ENCODE measurements at regions of chr14 and their contacts with region 1.

Region 1: GRCh38 chr14:69715725-69716477 is 51.0 kb upstream of the SRSF5 start:
- DNase-seq: peak; percentile 85
- H3K4me3 ChIP-seq: peak overlapping the region in 1 of 3 experiments; percentile 4
- H3K27ac ChIP-seq: peak overlapping the region; percentile 73
- H3K4me1 ChIP-seq: peaks cover 46% of the 10 kb centered on the region
- H3K27me3 ChIP-seq: no peaks in the 10 kb centered on the region
- CTCF ChIP-seq: no peak
- POLR2A ChIP-seq: no peak

Region 2: DNA sequence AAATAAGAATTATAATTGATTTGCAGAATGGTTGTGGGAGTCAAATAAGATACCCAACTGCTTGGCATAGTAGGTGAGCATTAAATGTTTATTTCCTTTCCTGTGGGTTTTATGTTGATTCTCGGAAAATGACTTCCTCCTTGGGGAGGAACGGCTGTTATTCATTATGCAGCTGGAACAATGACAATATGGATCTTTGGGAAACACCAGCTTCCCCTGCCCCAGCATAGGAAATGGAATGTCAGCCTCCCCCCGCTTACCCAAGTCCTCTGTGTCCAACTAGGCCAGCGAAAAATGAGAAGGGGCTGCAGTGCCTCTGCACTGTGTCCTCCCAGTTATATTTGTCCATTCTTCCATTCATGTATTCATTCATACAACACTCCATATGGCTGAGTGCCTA is 129.5 kb before region 1 on chr14:
- CTCF ChIA-PET with region 1: interaction called, 22 read pairs
- POLR2A ChIA-PET with region 1: no interaction called
- dilution Hi-C with region 1: no loop called
- intact Hi-C with region 1: no loop called
- DNase-seq: peak; percentile 90
- H3K4me3 ChIP-seq: no peak overlapping the region
- H3K27ac ChIP-seq: no peak overlapping the region
- H3K4me1 ChIP-seq: peaks cover 20% of the 10 kb centered on the region
- H3K27me3 ChIP-seq: no peaks in the 10 kb centered on the region
- CTCF ChIP-seq: no peak
- POLR2A ChIP-seq: no peak

Region 3: GRCh38 chr14:69625299-69626131 is 90.4 kb before region 1 on chr14:
- CTCF ChIA-PET with region 1: no interaction called
- POLR2A ChIA-PET with region 1: no interaction called
- dilution Hi-C with region 1: no loop called
- intact Hi-C with region 1: loop called (anchors 1 kb)
- DNase-seq: peak; percentile 78
- H3K4me3 ChIP-seq: no peak overlapping the region
- H3K27ac ChIP-seq: peak overlapping the region; percentile 54
- H3K4me1 ChIP-seq: peaks cover 18% of the 10 kb centered on the region
- H3K27me3 ChIP-seq: no peaks in the 10 kb centered on the region
- CTCF ChIP-seq: no peak
- POLR2A ChIP-seq: peak; percentile 44

Region 4: GRCh38 chr14:69667938-69668335 is 48.0 kb before region 1 on chr14:
- CTCF ChIA-PET with region 1: no interaction called
- POLR2A ChIA-PET with region 1: no interaction called
- dilution Hi-C with region 1: no loop called
- intact Hi-C with region 1: loop called (anchors 2 kb)
- DNase-seq: no peak
- H3K4me3 ChIP-seq: no peak overlapping the region
- H3K27ac ChIP-seq: no peak overlapping the region
- H3K4me1 ChIP-seq: peaks cover 9% of the 10 kb centered on the region
- H3K27me3 ChIP-seq: no peaks in the 10 kb centered on the region
- CTCF ChIP-seq: no peak
- POLR2A ChIP-seq: no peak

Region 5: GRCh38 chr14:69766984-69767368 is 51.1 kb after region 1 on chr14 and contains the start of gene SRSF5:
- CTCF ChIA-PET with region 1: no interaction called
- POLR2A ChIA-PET with region 1: no interaction called
- dilution Hi-C with region 1: no loop called
- intact Hi-C with region 1: loop called (anchors 1 kb)
- DNase-seq: peak; percentile 97
- H3K4me3 ChIP-seq: peak within 1 kb of the TSS; percentile 24 to 98 (median 76)
- H3K27ac ChIP-seq: peak within 1 kb of the TSS; percentile 88
- H3K4me1 ChIP-seq: peaks cover 27% of the 10 kb centered on the region
- H3K27me3 ChIP-seq: no peaks in the 10 kb centered on the region
- CTCF ChIP-seq: no peak
- POLR2A ChIP-seq: peak; percentile 99
- total RNA-seq, gene SRSF5: 253 and 276 TPM in 2 replicates

Measured in endothelial cell of umbilical vein (primary cell).